ENCODE measurements at regions of chr4 and their contacts with region 1.

Region 1: GRCh38 chr4:124334119-124334518 is 378.4 kb downstream of the ANKRD50 start:
- DNase-seq: peak; percentile 8 to 57 (median 10)
- ATAC-seq: peak; percentile 84
- H3K4me3 ChIP-seq: no peak overlapping the region
- H3K27ac ChIP-seq: no peak overlapping the region
- H3K4me1 ChIP-seq: peaks cover 0 to 5% of the 10 kb centered on the region in 2 experiments; a peak in 1 of 5 replicates
- H3K27me3 ChIP-seq: no peaks in the 10 kb centered on the region
- CTCF ChIP-seq: peak; percentile 10 to 62 (median 26); a peak in 4 of 6 replicates
- EP300 ChIP-seq: no peak
- POLR2A ChIP-seq: no peak
- RAD21 ChIP-seq: peak; percentile 70 to 83

Region 2: GRCh38 chr4:124469981-124470380 is 135.9 kb after region 1 on chr4:
- CTCF ChIA-PET with region 1: no interaction called
- POLR2A ChIA-PET with region 1: no interaction called
- in situ Hi-C with region 1: no loop called
- intact Hi-C with region 1: no loop called
- DNase-seq: no peak
- ATAC-seq: no peak
- H3K4me3 ChIP-seq: no peak overlapping the region
- H3K27ac ChIP-seq: no peak overlapping the region
- H3K4me1 ChIP-seq: no peaks in the 10 kb centered on the region
- H3K27me3 ChIP-seq: no peaks in the 10 kb centered on the region
- CTCF ChIP-seq: no peak
- EP300 ChIP-seq: no peak
- POLR2A ChIP-seq: no peak
- RAD21 ChIP-seq: no peak

Region 3: GRCh38 chr4:124768596-124769365 is 434.7 kb after region 1 on chr4:
- CTCF ChIA-PET with region 1: no interaction called
- POLR2A ChIA-PET with region 1: no interaction called
- in situ Hi-C with region 1: no loop called
- intact Hi-C with region 1: loop called (anchors 10 kb)
- DNase-seq: no peak
- ATAC-seq: no peak
- H3K4me3 ChIP-seq: no peak overlapping the region
- H3K27ac ChIP-seq: no peak overlapping the region
- H3K4me1 ChIP-seq: no peaks in the 10 kb centered on the region
- H3K27me3 ChIP-seq: no peaks in the 10 kb centered on the region
- CTCF ChIP-seq: no peak
- EP300 ChIP-seq: no peak
- POLR2A ChIP-seq: no peak
- RAD21 ChIP-seq: no peak

Region 4: DNA sequence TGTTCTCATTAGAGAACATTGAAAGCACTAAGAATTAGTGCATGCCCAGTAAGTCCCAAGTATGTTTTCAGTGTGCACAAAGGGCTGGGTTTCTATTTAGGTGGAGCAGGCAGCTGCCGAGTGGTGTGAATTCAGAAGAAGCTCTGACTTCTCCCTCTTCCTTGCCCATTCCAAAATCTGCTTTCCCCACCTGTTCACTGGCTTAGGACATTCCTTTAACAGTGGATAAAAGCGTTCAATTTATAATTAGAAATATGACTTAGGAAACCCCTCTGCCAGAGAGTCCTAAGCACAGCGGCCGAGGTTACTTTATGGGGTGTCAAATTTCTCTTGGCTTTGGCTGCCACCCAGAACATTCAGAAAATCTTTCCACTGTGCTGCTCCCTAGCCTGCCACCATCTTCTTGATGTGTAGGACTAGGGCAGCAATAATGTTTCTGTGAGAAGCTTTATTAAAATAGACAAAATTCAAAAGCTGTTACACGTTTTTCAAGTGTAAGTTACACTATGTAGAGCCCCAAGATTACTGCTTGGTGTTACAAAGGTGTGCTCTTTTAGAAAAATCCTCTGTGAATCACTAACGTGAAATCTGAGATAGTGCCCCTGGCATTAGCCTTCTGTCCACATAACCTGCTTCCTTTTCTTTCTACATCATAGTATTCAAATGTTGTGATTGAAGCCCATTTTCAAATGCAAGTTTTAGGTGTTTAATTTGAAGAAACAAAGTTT is 570.0 kb after region 1 on chr4:
- CTCF ChIA-PET with region 1: no interaction called
- POLR2A ChIA-PET with region 1: no interaction called
- in situ Hi-C with region 1: no loop called
- intact Hi-C with region 1: no loop called
- DNase-seq: no peak
- ATAC-seq: no peak
- H3K4me3 ChIP-seq: no peak overlapping the region
- H3K27ac ChIP-seq: no peak overlapping the region
- H3K4me1 ChIP-seq: no peaks in the 10 kb centered on the region
- H3K27me3 ChIP-seq: no peaks in the 10 kb centered on the region
- CTCF ChIP-seq: no peak
- EP300 ChIP-seq: no peak
- POLR2A ChIP-seq: no peak
- RAD21 ChIP-seq: no peak

Region 5: DNA sequence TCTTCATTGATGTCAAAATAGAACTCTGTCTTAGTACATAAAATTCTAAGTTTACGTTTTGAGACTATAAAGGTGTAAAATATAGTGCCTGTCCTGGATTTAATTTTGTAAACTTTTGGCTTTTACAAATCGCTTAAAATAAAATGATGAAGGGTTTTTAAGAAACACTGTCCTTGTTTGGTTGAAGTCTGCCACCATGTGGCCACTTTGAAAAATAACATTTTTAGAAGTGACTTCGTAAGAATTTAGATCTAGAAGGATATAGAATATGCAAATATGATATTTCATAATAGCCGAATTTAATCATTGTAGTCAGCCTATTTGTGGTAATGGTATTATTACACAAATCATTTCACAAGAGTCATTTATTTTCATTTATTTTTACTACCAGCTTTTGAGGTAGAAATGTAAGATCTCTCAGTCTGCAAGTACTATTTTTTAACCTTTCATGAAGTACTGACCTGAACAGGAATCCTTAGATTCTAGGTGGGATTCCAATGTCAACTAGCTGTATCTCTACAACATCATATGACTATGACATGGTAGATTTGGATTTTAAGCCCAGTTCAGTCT is 949.7 kb after region 1 on chr4:
- CTCF ChIA-PET with region 1: interaction called, 9 read pairs
- POLR2A ChIA-PET with region 1: no interaction called
- in situ Hi-C with region 1: loop called (anchors 25 kb)
- intact Hi-C with region 1: loop called (anchors 1 kb)
- DNase-seq: peak; percentile 5 to 30 (median 12)
- ATAC-seq: no peak
- H3K4me3 ChIP-seq: no peak overlapping the region
- H3K27ac ChIP-seq: no peak overlapping the region
- H3K4me1 ChIP-seq: no peaks in the 10 kb centered on the region
- H3K27me3 ChIP-seq: no peaks in the 10 kb centered on the region
- CTCF ChIP-seq: peak in 1 of 3 experiments; percentile 66; a peak in 3 of 6 replicates
- EP300 ChIP-seq: no peak
- POLR2A ChIP-seq: no peak
- RAD21 ChIP-seq: peak; percentile 72